OCI-LY7 (cell line): ENCODE measurements at regions of chr1 and their contacts with region 1.

Region 1: DNA sequence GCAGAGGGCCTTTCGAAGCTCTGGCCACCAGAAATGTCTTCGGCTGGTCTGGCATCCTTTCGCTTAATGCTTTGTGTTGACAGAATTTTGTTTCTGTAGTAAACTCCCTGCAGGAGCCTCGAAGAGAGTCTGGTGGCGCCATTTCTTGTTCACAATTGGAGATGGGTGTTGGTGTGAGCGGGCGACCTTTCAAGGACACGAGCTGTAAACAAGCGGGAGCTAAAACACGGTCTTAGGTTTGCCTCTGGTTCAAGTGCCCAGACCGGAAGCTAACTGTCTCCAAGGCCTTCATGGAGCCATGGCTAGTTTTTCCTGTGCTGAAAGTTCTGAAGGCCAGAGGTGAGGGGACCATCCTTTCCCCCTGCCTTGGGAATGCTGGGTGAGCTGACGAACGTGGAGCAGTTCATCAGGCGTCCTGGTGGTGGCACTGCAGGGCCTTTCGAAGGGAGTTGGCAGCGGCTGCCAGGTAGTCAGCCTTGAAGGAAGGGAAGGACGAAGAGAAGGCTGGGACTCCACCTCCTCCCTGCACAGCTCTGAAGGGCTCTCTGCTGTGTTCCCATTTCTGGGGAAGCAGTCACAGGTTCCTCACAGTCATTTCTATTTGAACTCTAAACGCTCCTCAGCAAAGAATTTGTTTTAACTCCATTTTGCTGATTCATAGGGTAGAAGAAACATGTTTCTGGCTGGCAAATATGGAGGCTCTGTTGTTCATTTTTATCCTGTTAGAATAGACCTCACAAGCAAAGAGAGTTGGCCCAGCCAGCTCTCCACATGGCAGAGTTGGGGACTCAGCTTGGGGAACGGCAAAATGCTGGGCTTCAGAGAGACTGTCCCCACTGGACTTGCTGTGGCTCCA is 35.2 kb downstream of the URB2 start:
- DNase-seq: peak; percentile 79
- H3K4me3 ChIP-seq: no peak overlapping the region
- H3K27ac ChIP-seq: no peak overlapping the region
- H3K4me1 ChIP-seq: peaks cover 29% of the 10 kb centered on the region
- CTCF ChIP-seq: peak; percentile 94

Region 2: DNA sequence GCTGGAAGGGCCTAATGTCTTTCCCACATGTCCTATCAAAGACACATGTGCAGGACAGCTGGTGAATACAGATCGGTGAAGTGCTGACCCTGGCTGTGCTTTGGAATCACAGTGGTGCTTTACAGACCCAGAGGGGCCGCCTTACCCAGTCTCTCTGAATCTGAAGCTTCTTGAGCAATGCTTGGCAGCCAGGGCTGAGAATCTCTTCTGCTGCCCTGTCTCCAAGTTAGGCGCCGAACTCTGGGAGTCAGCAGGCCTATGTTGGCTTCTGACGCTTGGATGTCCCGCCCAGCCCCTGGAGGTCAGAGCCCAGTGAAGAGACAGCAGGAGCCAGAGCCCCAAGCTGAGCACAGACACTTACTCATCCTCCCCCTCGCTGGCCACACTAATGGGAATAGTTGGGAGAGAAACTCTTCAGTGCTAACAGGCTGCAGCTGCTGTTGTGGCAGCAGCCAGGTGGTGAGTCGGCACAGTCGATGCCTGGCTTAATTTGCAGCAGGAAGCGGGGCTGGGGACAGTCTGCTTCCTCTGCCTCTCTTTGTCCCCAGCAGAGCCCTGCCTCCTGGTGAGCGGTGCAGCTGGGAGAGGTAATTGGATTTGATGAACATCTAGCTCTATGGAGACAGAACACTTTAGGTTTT is 32.9 kb after region 1 on chr1:
- CTCF ChIA-PET with region 1: interaction called, 6 read pairs
- POLR2A ChIA-PET with region 1: no interaction called
- intact Hi-C with region 1: loop called (anchors 2 kb)
- DNase-seq: peak; percentile 86
- H3K4me3 ChIP-seq: peak overlapping the region; percentile 42
- H3K27ac ChIP-seq: peak overlapping the region; percentile 97
- H3K4me1 ChIP-seq: peaks cover 77% of the 10 kb centered on the region
- CTCF ChIP-seq: no peak